ENCODE measurements at regions of chr11 and their contacts with region 1.

Region 1: GRCh38 chr11:8911029-8911826 is at the start of gene AKIP1:
- DNase-seq: peak; percentile 97
- ATAC-seq: peak; percentile 97
- total RNA-seq, gene AKIP1: 22.6 to 23.2 TPM

Region 2: DNA sequence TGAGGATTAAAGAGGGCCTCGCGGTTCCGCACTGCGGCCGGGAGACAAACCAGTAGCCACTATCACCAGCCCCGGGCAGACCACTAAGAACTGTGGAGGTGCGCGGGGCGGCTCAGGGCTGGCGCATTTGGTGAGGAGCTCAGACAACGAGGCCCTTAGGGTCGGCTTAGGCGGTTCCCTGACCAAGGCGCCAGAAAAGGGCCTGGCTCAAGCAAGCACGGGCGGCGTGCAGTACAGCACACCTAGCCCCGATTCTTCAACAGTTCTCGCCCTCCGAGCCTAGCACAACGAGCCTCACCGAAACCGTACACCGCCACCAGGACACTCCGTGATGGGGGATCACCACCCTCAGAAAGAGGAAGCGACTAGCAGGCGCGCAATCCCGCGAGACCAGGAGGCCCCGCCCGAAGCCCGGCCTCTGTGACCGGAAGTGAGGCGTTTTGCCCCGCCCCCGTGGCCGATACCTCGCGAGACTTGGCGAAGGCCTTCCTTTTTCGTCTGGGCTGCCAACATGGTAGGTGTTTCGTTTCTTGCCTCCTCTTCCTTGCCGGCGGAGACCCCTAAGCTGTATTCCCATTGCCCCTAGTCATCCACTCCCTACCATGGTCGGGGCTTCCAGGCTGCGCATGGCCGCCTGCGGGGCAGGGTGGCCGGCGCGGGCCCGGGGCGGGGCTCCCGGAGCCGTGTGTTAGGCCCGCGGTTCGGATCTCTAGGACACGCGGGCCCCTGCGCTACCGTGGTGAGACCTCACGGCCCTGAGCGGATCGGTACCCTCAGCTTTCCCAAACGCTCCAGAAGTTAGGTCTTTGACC is 228.7 kb before region 1 on chr11 and contains the starts of genes RPL27A and TRIM66:
- intact Hi-C with region 1: loop called in 1 of 2 experiments (anchors 5 kb)
- DNase-seq: peak; percentile 99
- ATAC-seq: peak; percentile 99
- total RNA-seq, gene RPL27A: 577 to 727 TPM
- total RNA-seq, gene TRIM66: 2.3 to 3.2 TPM

Region 3: GRCh38 chr11:8948886-8949285 is 37.7 kb after region 1 on chr11:
- intact Hi-C with region 1: no loop called
- DNase-seq: no peak
- ATAC-seq: no peak

Region 4: DNA sequence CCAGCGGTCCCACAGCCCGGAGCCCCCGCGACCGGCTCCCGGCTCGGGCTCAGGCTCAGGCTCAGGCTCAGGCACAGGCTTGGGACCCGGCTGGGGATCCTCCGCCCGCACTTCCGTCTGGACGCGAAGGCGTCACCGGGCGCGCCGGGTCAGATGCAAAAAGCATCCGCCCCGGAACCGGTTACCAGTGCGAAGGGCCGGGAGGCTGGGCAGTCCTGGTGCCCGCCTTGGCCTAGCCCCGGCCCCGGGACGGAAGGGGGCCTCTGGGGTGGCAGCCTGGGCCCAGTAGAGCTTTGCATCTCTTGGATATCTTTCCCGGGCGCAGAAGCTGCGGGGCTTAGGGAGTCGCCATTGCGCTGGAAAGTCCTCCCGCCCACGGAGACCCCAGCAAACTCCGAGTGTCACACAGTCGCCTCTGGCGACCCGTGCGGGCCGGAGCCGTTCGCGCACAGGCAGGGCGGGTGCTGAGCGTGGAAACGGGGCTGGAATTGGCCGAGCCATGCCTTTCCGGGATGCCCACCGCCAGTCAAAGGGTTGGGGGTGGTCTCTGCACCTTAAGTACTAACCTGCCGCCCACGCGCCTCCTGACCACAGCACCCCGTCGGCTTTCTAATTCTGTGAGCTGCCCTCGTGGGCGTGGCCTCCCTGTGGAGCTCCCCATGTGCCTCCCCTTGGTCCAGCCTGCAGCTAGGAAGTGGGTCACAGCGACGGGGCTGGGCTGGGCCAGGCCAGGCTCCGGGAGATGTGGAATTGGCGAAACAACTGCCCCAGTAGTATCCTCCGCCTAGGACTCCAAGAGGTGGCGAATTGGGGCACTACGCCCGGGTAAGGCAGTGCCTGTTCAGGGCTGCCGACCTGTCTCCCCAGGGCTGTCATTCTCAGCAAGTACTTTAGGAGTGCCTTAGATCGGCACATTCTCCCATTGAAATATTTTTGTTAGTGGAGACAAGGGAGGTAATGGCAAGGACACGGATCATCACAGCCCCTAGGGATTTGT is 53.4 kb after region 1 on chr11 and contains the start of gene TMEM9B:
- intact Hi-C with region 1: loop called in 1 of 2 experiments (anchors 2 kb)
- DNase-seq: peak; percentile 95
- ATAC-seq: peak; percentile 95 to 98
- total RNA-seq, gene TMEM9B: 35.9 to 45.9 TPM

Region 5: DNA sequence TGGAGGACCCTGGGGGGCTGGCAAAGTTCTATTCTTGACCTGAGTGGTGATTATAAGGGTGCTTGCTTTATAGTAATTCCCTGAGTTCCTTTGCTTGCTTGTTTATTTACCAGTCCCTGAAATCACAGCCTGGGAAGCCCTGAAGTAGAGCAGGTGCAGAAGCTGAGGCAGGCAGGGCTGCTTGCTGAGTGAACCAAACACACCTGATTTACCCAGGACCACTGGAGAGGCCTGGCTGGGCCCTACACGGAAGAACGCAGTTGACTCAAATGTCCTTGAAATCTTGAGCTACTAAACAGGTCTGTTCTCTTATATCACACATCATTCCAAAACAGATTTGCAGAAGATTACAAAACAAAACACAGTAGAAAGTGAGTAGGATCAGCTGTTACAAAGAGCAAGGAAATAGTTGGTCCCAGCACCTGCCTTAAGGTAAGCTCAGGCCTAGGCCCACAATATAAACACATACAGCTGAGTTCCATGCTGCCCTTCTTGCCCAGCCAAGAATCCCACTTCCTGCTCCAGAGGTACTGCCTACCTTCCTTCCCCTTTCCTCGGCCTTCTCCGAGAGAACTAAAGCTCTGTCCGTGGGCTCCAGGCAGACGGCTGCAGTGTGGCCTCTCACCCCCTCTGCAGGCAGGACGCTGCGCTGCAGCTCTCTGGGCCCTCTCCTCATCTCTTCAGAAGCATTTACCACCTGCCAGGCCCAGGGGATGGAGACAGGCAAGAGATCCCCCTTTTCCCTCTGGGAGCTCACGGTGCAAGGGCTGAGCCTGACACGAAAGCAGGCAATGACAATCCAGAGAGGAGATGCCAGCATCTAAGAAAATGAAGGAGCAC is 226.3 kb after region 1 on chr11:
- intact Hi-C with region 1: loop called in 1 of 2 experiments (anchors 10 kb)
- DNase-seq: peak; percentile 67
- ATAC-seq: peak; percentile 89 to 92

Region 6: GRCh38 chr11:9428706-9429105 is 517.5 kb after region 1 on chr11:
- intact Hi-C with region 1: no loop called
- DNase-seq: no peak
- ATAC-seq: no peak

Measured in left cardiac atrium (tissue), 4 donors.